Posterior vena cava (tissue), 2 donors: ENCODE measurements at regions of chr11 and their contacts with region 1.

Region 1: GRCh38 chr11:99865951-99866350 is 821.1 kb upstream of the ARHGAP42 start:
- DNase-seq: no peak

Region 2: GRCh38 chr11:99640671-99641070 is 225.3 kb before region 1 on chr11:
- intact Hi-C with region 1: loop called in 1 of 2 experiments (anchors 5 kb)
- DNase-seq: no peak